ENCODE measurements at regions of chr4 and their contacts with region 1.

Region 1: GRCh38 chr4:157885811-157886210 is 287.0 kb downstream of the GASK1B start:
- DNase-seq: no peak
- ATAC-seq: no peak

Region 2: DNA sequence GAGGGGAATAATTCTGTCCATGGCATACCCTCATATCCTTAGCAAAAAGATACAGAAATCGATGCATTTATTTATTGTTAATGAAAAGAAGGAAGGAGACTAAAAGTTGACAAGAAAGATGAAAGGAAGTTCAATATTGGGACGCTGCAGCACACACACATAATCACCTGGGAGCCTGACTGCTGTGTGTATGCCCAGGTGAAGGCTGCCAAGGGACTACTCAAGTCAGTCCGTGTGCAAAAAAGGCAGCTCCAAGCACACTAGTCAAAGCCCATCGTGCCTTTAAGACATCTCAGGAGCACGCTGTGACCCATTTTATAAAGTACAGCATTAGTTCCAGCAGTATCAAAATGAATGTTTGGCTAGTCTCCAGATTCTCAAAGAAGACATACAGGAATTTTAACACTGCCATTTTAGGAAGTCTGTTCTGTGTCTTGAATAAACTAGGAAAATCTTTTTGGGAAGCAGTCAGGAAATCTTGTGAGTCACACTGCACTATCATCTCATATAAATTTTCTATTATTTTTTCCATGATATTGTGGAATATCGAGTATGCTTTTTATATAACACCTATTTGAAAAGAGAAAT is 76.9 kb before region 1 on chr4:
- intact Hi-C with region 1: loop called (anchors 2 kb)
- DNase-seq: no peak
- ATAC-seq: no peak

Region 3: DNA sequence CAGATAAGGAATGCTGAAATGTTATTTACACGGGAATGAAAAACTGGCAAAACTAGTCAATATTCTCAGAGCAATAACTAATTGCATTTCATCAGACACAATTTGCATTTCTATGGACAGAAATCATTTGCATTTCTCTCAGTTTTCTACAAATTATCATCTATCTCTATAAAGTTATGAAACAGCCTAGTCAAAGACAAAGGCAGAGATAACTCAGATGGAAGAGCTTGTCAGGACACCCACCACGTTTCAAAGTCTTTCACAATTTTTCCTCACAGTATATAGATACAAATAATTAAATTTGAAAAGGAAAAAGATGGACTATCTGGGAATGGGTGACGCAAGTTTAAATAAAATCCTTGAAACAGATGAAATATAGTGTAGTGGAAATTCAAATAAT is 56.2 kb after region 1 on chr4:
- intact Hi-C with region 1: no loop called
- DNase-seq: no peak
- ATAC-seq: no peak

Region 4: GRCh38 chr4:158172261-158173258 is 286.7 kb after region 1 on chr4 and contains the start of gene GASK1B:
- intact Hi-C with region 1: no loop called
- DNase-seq: peak; percentile 63
- ATAC-seq: peak; percentile 61
- total RNA-seq, gene GASK1B: 100 TPM

Measured in sciatic nerve (tissue), 2 donors.